ENCODE measurements at regions of chr13 and their contacts with region 1.

Region 1: DNA sequence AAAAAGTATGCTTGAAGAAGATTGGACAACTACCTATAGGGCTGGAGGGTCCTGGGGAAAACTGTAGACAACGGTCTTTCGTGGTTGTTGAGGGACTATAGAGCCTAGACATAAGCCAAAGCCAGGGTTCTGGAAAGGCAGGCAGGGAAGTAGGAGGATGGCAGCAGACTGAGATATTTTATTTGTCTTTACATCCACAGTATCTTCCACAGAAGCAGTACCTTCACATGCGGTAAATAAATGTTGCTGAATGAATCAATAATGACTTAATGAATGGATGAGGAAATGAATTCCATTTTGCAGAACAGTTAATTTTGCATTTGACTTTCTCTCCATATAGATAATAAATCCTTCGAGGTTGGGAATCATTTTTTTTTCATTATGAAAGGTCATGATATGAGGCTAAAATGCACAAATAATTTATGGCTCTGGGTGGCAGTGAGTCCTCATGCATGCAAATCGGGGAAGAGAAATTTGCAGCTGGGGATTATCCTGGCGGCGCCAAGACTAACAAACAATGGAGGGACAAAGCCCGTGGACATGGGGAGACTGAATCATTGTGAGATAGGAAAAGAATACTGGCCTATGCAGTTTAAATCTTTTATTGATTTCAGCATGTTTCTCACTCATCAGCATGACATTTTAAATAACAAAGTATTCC is 102.0 kb downstream of the ERCC5 start:
- DNase-seq: peak; percentile 32 to 92 (median 78)

Region 2: DNA sequence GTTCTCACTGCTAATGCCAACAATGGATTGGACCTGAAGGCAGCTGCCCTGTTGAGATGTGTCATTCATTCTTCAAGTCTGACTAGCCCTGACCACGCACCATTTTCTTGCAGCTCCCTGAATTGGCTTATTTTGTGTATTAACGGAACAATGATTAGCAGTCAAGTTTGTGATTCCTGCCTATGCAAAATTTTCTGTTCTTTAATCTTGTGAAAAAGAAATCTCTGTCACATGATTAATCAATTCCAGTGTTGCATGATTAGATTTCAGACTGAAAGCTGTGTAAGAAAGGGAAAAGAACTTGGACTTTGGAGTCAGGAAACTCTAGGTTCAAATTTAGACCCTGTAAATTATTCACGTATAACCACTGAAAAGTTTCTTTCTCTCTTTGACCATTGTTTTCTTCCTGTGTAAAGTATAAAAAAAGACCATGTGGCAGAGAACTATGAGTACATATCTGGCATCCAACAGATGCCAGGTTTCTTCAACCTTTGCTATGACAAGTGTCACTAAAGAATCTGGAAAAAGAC is 182.9 kb after region 1 on chr13:
- intact Hi-C with region 1: loop called (anchors 10 kb)
- DNase-seq: no peak